ENCODE measurements at regions of chr9 and their contacts with region 1.

Region 1: DNA sequence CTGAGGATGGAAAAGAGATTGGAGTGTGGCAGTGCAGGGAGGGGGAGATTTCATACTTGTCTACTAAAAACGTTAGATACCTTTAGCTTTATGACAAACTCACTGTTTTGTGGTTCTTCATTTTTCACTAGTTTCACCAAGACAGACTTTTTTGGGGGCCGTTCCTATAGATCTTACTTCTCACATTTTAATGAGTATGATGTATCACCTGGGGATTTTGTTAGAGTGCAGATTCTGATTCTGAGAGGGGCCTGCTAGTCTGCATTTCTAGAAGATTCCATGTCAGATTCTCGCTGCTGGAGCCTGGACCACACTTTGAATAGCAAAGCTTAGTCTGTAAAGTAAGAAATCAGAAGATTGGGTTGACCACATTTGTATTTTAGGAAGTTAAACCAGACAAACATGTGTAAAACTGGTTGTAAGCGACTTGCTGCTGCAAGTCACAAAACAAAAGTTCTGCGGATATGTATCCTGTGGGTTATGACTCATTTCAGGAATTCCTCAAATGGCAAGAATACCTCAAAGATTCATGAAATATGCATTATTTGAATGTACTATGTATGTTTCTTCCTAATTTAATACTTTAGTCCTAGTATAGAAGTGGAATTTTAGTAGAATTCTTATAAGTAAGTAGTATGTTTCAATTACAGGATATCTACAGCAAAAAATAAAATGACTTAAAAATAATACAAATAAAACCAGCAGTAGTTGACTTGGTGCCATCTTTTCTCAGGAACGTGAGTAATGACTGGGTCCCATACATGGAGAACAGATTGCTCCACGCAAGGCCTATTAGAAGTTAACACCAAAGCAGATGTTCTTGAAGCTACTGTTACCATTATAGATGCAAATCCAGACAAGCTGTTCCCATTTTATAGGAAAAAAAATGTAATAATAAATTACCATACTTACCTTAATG is 27.8 kb downstream of the NFIL3 start:
- DNase-seq: peak; percentile 41
- H3K4me3 Mint-ChIP-seq: no peak overlapping the region
- H3K27ac Mint-ChIP-seq: peak overlapping the region; percentile 74
- H3K4me1 Mint-ChIP-seq: peaks cover 11% of the 10 kb centered on the region
- H3K27me3 Mint-ChIP-seq: peaks cover 12% of the 10 kb centered on the region

Region 2: DNA sequence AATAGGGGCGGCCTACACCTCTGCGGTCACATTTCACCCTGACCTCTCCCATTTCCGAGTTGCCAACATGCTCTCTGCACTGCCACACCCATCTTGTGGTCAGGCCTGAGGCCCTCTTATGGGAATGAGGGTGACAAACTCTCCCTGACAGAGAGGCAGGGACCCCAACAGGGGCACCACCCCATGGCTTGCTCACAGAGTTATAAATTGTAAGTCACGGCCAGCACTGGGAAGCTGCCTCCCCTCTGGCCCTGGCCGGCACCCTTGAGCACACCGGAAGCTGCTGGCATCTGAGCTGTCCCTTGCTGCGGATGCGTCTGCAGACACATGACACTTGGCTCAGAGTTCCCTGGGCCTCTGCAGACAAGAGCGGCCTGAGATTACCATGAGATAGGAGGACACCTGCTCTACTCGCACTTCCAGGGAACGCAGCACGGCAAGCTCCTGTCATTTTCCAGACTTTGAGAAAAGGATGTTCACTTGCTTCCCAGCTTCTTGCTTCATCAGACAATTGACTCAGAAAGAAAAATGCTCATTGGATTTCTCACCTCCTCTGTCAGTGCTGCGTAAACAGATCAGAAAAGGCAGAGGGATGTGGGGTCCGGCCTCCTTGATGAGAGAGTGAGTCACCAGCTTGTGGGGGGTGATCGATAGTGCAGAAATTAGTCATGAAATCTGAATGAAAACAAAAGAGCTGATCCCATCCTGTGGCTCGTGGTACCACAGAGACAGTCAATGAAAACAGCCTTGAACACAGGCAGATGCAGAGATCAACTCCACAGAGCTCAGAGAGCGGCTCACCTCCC is 324.4 kb before region 1 on chr9:
- CTCF ChIA-PET with region 1: no interaction called
- intact Hi-C with region 1: loop called (anchors 1 kb)
- DNase-seq: peak; percentile 85
- H3K4me3 Mint-ChIP-seq: no peak overlapping the region
- H3K27ac Mint-ChIP-seq: peak overlapping the region; percentile 57
- H3K4me1 Mint-ChIP-seq: peaks cover 11% of the 10 kb centered on the region
- H3K27me3 Mint-ChIP-seq: peaks cover 13% of the 10 kb centered on the region

Region 3: DNA sequence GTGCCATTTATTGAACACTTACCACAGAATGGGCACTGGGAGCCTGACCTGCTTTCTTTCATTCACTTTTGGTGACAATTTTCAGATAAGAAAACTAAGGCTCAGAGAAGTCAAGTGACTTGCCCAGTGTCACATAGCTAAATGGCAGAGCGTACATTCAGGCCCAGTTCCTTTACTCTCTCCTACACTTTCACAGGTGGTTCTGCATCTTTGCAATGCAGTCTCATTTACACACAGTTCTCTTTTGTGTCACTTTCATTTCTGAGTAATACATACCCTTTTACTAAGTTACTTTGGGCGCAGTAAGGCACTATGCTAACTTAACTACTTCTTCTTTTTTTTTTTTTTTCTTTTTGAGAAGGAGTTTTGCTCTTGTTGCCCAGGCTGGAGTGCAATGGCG is 19.5 kb after region 1 on chr9:
- CTCF ChIA-PET with region 1: interaction called, 4 read pairs
- intact Hi-C with region 1: loop called (anchors 1 kb)
- DNase-seq: peak; percentile 56
- H3K4me3 Mint-ChIP-seq: no peak overlapping the region
- H3K27ac Mint-ChIP-seq: peak overlapping the region; percentile 80
- H3K4me1 Mint-ChIP-seq: peaks cover 69% of the 10 kb centered on the region
- H3K27me3 Mint-ChIP-seq: peaks cover 2% of the 10 kb centered on the region

Measured in activated naive CD4-positive, alpha-beta T cell treated with anti-CD3 and anti-CD28 coated beads for 36 hours (primary cell).